ENCODE measurements at regions of chr5 and their contacts with region 1.

Region 1: DNA sequence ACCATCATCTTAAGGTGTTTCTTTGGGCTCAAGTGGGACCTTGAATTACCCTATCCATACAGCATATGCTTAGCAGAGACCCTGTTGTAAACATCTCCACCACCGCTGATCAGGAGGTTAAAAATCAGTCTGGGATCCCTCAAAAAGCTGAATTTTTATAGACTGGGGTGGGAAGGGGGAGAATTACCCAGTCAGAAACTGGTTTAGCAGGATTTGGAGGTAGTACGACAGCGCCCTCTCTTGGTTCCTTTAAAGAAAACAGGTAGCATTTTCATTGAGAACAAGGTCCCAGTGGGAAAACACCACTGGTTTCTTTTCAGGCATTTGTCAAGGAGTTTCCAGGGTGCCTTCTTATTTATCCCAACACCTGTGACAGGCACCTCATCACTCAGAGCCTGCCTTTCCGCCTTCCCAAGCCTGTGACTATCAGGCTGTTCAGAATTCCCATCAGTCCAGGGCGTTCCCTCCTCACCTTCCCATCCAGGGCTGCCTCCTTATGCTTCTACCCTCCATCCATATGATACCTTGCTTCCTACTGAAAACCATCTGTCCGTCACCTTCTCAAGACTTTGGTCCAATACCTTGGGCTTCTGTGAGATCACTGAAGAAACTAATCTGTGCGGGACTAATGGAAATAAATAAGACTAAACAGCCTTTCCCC is 203.8 kb upstream of the RAI14 start:
- DNase-seq: no peak
- H3K4me3 ChIP-seq: no peak overlapping the region
- H3K27ac ChIP-seq: no peak overlapping the region
- H3K4me1 ChIP-seq: no peaks in the 10 kb centered on the region
- H3K27me3 ChIP-seq: no peaks in the 10 kb centered on the region
- CTCF ChIP-seq: no peak

Region 2: DNA sequence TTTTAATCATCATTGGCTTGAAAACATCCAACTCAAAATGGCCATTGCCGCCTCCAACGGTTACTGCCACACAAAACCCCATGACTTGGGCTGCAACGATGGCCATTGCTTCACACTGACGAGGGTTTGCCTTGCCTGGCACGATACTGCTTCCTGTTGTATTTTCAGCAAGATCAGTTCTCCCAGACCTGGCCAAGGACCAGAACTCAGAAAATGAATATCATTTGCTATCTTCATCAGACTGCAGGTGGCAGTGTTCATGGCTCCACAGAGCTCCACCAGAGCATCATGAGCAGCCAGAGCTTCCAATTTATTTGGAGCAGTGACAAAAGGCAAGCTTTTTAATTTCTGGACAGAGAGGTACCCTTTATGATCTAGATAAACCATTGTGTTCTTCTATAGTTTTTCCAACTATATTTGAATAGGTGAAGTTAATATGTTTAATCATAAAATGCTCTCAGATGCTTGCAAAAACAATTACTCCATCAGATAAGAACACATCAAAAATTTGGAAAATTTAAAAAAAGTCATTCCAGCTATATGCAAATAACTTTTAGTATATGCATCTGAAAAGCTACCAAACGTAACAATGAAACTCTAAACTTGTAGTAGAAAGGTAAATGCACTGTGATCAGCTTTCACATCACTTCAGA is 454.8 kb before region 1 on chr5:
- intact Hi-C with region 1: loop called (anchors 10 kb)
- DNase-seq: peak; percentile 55
- H3K4me3 ChIP-seq: no peak overlapping the region
- H3K27ac ChIP-seq: no peak overlapping the region
- H3K4me1 ChIP-seq: no peaks in the 10 kb centered on the region
- H3K27me3 ChIP-seq: no peaks in the 10 kb centered on the region
- CTCF ChIP-seq: peak; percentile 57

Region 3: GRCh38 chr5:35046774-35047173 is 594.5 kb after region 1 on chr5:
- intact Hi-C with region 1: no loop called
- DNase-seq: no peak
- H3K4me3 ChIP-seq: no peak overlapping the region
- H3K27ac ChIP-seq: no peak overlapping the region
- H3K4me1 ChIP-seq: no peaks in the 10 kb centered on the region
- H3K27me3 ChIP-seq: no peaks in the 10 kb centered on the region
- CTCF ChIP-seq: no peak

Measured in colonic mucosa (tissue), 4 donors.